ENCODE measurements at regions of chr5 and their contacts with region 1.

Region 1: GRCh38 chr5:141843162-141843927 is 34.9 kb downstream of the PCDH1 start:
- DNase-seq: no peak
- H3K4me3 ChIP-seq: peak overlapping the region in 1 of 4 experiments; percentile 7; a peak in 1 of 8 replicates
- H3K27ac ChIP-seq: peak overlapping the region; percentile 65
- H3K4me1 ChIP-seq: peaks cover 44 to 77% (median 62%) of the 10 kb centered on the region in 4 experiments
- H3K27me3 ChIP-seq: no peaks in the 10 kb centered on the region
- CTCF ChIP-seq: no peak
- EP300 ChIP-seq: no peak
- POLR2A ChIP-seq: no peak
- RAD21 ChIP-seq: no peak

Region 2: DNA sequence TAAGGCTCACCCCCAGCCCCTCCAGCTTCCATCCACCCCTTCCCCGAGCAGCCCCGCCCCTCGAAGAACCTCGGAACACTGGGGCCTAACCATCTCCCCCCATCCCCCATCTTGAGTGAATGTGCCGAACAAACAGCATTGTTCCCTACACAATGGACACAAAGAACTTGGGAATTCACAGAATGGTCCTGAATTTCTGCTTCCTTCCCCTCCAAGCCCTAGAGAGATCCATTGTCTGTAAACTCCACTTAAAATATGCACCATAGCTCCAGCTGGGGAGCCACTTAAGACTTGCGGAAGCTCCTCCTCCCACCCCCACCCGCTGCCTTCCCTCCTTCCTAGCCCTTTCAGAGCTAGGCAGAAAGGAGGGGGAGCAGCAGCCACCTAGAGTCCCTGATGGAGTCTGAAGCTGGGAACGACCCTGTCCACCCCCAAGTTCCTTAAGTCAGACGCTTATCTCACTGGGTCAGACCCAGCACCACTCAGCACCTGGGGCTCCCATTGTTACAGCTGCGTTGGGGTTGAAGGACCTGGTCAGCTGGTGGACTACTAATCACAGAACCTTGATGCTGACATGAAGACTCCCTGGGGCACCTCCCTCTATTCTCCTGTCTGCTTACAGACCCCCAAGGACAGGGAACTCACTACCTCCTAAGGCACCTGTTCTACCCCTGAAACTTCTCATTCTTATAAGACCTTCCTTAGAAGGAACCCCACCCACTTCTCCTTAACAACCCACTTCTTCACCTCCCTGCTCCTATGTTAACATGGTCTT is 26.6 kb before region 1 on chr5:
- CTCF ChIA-PET with region 1: interaction called, 169 read pairs
- POLR2A ChIA-PET with region 1: interaction called, 121 read pairs
- DNase-seq: peak; percentile 74 to 95
- H3K4me3 ChIP-seq: peak overlapping the region in 1 of 4 experiments; percentile 41; a peak in 2 of 8 replicates
- H3K27ac ChIP-seq: peak overlapping the region; percentile 77; the same call in 1 of the 2 replicates
- H3K4me1 ChIP-seq: peaks cover 35 to 49% (median 39%) of the 10 kb centered on the region in 4 experiments
- H3K27me3 ChIP-seq: no peaks in the 10 kb centered on the region
- CTCF ChIP-seq: no peak
- EP300 ChIP-seq: peak in 1 of 2 experiments; percentile 96; a peak in 2 of 3 replicates
- POLR2A ChIP-seq: peak in 1 of 2 experiments; percentile 57; a peak in 1 of 3 replicates
- RAD21 ChIP-seq: peak; percentile 2 to 12; a peak in 1 of 4 replicates

Measured in H1 (cell line).